Aorta (tissue), 5 donors: ENCODE measurements at regions of chr11 and their contacts with region 1.

Region 1: DNA sequence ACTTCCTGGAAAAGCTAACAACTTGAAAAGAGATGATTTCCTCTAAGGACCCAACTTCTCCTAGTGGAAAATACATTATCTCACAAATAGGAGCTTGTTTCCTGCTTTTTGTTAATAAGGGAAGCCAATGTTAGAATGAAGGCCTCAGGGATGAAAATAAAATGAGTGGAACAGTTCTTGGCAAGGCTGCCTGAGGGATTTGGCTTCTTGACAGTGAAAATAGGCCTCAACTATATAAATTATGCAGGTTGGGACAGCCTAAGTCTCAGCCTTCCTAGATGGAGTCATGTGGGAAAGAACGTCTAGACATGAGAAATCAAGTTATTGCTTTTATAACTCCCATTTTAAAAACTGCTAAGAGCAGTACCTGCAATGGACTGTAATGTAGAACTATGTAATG is 92.8 kb upstream of the FIBIN start:
- DNase-seq: peak in 1 of 2 donors; percentile 48
- ATAC-seq: peak; percentile 82
- H3K4me3 ChIP-seq: no peak overlapping the region
- H3K27ac ChIP-seq: peak overlapping the region in 1 of 2 donors; percentile 12
- H3K4me1 ChIP-seq: peaks cover 0 to 9% of the 10 kb centered on the region in 2 donors
- H3K27me3 ChIP-seq: no peaks in the 10 kb centered on the region

Region 2: DNA sequence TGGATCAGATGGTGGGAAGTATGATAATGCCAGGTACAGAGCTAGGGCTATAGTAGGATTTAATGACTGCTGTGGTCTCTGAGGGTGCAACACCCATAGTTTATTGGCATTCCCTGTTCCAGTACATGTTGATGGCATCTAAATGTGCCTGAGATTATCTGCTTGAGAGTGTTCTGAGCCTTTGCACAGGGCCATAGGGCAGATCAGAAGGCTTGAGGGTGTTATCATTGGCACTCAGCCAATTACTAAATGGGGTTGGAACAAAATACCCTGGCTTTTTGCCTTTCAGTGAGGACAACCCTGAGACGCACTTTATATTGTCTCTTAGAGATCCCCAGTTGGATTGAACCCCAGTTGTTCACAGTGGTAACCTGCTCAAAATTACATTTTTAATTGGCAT is 186.0 kb before region 1 on chr11:
- intact Hi-C with region 1: no loop called
- DNase-seq: no peak
- ATAC-seq: no peak
- H3K4me3 ChIP-seq: no peak overlapping the region
- H3K27ac ChIP-seq: no peak overlapping the region
- H3K4me1 ChIP-seq: no peaks in the 10 kb centered on the region
- H3K27me3 ChIP-seq: no peaks in the 10 kb centered on the region

Region 3: DNA sequence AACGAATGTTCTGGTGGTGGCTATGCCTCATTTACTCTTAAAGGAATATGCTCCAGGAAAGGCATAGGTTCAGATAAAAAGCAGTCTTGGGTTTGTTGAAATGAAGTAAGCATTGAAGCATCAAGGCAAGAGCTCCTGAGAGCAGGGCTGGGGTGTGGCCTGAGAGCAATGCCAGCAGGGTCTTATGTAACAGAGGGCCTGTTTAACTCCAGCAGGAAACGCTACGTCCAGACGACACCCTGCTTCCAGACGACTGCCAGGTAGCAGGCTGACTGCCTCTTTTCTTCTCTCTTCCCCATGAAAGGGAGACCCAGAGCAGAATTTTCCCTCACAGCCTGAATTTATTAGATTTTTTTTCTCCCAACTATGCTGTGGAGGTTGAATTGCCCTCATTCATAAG is 52.1 kb before region 1 on chr11:
- intact Hi-C with region 1: loop called in 1 of 2 experiments (anchors 5 kb)
- DNase-seq: peak; percentile 55 to 76
- ATAC-seq: peak; percentile 26
- H3K4me3 ChIP-seq: no peak overlapping the region
- H3K27ac ChIP-seq: peak overlapping the region in 1 of 2 donors; percentile 73
- H3K4me1 ChIP-seq: peaks cover 0 to 5% of the 10 kb centered on the region in 2 donors
- H3K27me3 ChIP-seq: no peaks in the 10 kb centered on the region

Region 4: DNA sequence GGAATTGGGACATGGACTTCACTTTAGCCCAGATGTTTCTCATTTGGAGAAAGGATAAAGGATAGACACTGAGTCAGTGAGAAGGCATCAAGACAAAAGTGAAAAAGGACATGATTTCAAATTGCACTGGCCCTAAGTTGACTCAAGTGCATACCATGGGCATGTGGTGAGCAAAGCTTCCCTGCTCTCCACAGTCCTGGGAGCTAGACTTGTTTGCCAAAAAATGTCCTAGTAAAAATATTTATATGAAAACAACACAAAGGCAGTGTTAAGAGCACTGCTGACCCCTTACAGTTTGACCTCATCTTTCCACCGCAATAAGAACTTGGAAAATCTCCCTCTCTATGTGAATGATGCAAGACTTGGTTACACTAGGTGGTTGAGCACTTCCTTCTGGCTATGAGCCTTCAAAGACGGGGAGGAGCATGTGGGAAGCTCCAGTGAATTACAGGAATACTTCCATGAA is 46.2 kb after region 1 on chr11:
- intact Hi-C with region 1: loop called in 1 of 2 experiments (anchors 5 kb)
- DNase-seq: peak in 1 of 2 donors; percentile 64
- ATAC-seq: peak; percentile 93
- H3K4me3 ChIP-seq: no peak overlapping the region
- H3K27ac ChIP-seq: peak overlapping the region in 1 of 2 donors; percentile 48
- H3K4me1 ChIP-seq: peaks cover 2 to 16% of the 10 kb centered on the region in 2 donors
- H3K27me3 ChIP-seq: no peaks in the 10 kb centered on the region